WTC11 (cell line): ENCODE measurements at regions of chr3 and their contacts with region 1.

Region 1: DNA sequence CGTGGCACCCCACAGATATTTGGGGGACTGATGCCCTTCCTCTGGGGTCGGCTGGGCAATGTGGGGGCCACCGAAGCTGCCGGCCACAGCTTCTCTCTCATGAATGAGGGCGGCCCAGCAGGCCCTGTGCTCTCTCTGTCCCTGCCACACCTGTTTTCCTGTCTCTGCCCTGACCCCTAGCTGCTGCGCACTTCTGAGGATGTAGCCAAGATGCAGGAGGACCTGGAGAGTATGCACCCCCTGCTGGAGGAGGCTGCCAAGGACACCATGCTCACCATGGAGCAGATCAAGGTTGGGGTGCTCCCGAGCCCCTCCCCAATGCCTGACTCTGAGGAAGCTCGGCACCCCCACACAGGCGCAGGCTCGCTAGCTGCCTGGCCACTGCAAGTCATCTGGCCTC is 59.7 kb downstream of the SEMA3G start:
- DNase-seq: peak; percentile 88
- ATAC-seq: peak; percentile 94
- H3K4me3 Mint-ChIP-seq: no peak overlapping the region
- H3K27ac Mint-ChIP-seq: peak overlapping the region; percentile 70; the same call in 1 of the 2 replicates
- H3K4me1 Mint-ChIP-seq: peaks cover 5% of the 10 kb centered on the region; the same call in 1 of the 2 replicates
- H3K27me3 Mint-ChIP-seq: no peaks in the 10 kb centered on the region
- CTCF ChIP-seq: peak; percentile 65

Region 2: DNA sequence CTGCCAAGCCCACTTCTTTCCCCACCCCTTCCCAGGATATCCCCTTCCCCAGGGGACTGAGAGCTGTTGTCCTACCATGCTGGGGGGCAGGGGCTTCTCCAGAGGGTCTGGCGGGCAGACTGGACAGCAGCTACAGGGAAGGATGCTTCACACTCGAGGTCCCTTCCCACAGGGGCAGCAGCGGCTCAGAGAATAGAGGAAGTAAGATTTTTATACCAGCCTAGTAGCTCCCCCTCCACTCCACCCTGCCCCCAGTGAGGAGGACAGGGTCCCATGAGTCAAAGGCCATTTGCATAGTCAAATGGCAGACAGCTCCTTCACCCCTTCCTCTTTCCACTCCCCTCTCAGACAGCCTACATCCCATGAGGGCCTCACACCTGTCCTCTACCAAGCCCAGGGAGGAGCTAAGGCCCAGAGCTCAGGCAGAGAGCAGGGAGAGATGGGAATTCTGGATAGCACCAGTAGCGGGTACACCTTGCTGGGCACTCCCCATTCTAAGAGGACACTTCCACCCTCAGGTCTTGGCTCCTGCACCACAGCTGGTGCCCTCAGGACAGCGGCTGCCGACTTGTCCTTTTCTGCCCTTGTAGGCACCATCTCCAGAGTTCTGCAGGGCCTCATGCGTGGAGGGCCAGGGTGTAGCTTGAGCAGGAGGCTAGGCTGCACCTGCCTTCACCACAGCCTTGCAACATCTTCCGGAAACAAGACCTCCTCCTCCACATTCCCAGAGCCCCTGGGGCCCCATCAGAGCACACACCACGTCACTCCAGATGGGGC is 159.5 kb before region 1 on chr3 and contains the start of gene TLR9:
- CTCF ChIA-PET with region 1: interaction called, 73 read pairs
- POLR2A ChIA-PET with region 1: no interaction called
- DNase-seq: no peak
- ATAC-seq: peak; percentile 21; the same call in 1 of the 2 replicates
- H3K4me3 Mint-ChIP-seq: no peak within 1 kb of the TSS
- H3K27ac Mint-ChIP-seq: no peak within 1 kb of the TSS
- H3K4me1 Mint-ChIP-seq: peaks cover 5% of the 10 kb centered on the region
- H3K27me3 Mint-ChIP-seq: no peaks in the 10 kb centered on the region
- CTCF ChIP-seq: no peak
- total RNA-seq, gene TLR9: not detected in 3 replicates

Region 3: DNA sequence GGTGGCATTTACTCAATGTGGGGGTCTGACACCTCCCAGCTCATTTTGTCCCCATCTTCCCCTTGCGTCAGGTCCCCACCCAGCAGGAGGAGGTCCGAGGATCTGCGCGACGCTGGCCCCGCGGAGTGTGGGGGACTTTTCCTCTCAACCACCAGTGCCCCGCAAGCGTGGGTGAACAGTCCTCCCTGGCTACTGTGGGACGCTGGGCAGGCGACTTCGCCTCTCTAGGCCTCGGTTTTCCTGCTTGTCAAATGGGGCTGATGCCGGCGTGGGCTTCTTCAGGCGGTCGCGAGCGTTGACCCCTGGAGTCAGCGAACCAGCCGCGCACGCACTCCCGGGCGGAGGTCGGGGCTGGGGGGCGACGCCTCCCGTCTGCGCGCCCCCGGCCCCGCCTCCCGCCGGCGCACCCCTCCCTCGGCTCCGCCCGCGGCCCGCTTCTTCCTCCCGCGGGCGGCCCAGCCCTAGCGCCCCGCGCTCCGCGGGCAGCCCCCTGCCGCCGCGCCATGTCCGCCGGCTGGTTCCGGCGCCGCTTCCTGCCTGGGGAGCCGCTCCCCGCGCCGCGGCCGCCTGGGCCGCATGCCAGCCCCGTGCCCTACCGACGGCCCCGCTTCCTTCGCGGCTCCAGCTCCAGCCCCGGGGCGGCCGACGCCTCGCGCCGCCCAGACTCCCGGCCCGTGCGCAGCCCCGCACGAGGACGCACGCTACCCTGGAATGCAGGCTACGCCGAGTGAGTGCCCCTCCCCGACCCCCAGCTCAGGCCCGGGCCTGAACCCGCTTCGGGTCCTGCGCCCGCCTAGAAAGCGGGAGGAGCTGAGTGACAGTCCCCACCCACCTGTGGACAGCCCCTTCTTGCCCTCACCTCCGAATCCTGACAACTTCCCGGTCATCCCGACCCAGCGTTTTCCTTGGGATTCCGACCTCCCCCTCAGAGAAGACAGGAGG is 139.6 kb before region 1 on chr3 and contains the start of gene PPM1M:
- CTCF ChIA-PET with region 1: interaction called, 10 read pairs
- POLR2A ChIA-PET with region 1: no interaction called
- DNase-seq: peak; percentile 72
- ATAC-seq: peak; percentile 86
- H3K4me3 Mint-ChIP-seq: peak within 1 kb of the TSS; percentile 67
- H3K27ac Mint-ChIP-seq: no peak within 1 kb of the TSS
- H3K4me1 Mint-ChIP-seq: peaks cover 15% of the 10 kb centered on the region
- H3K27me3 Mint-ChIP-seq: peaks cover 50% of the 10 kb centered on the region
- CTCF ChIP-seq: no peak
- total RNA-seq, gene PPM1M: 5.1 to 7.0 TPM (median 6.0 TPM) in 3 replicates

Region 4: GRCh38 chr3:52299879-52300611 is 85.1 kb before region 1 on chr3:
- CTCF ChIA-PET with region 1: interaction called, 74 read pairs
- POLR2A ChIA-PET with region 1: no interaction called
- DNase-seq: peak; percentile 26
- ATAC-seq: peak; percentile 55
- H3K4me3 Mint-ChIP-seq: peak overlapping the region; percentile 65
- H3K27ac Mint-ChIP-seq: no peak overlapping the region
- H3K4me1 Mint-ChIP-seq: peaks cover 18% of the 10 kb centered on the region
- H3K27me3 Mint-ChIP-seq: peaks cover 6% of the 10 kb centered on the region
- CTCF ChIP-seq: no peak

Region 5: DNA sequence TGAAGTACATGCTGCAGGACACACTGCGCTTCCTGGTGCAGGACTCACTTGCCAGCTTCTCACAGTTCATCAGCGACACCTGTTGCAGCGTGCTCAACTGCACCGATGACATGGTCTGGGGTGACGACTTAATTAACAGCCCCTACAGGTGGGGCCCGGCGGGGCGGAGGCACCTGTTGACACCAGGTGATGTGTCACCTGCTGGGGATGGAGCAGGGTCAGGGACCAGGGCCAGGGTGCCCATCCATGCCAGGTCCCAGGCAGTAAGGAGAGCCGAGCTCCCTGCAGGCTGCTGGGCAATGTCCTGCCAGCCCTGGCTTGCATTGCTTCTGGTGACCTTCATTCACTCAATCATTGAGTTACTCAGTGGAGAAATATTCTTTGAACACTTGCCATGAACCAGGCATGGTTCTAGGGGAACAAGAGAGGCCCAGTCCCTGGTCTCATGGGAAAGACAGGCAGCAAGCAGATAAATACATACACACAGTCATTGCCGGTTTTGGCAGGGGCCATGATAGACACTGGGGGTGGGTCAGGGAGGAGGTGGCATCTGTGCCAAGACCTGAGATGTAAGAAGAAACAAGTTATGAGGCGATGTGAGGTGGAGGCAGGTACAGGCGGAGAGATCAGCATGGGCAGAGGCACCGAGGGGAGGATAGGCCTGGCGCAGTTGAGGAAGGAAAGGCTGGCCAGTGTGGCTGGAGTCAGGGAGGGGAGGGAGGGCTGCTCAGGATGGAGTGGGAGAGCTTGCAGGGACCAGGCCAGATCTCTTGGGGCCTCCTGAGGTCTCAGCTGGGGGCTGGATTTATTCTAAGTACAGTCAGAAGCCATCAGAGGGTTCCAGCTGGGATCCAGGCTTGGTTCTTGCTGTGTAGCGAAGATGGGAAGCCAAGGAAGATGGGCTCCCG is 38.3 kb before region 1 on chr3:
- CTCF ChIA-PET with region 1: interaction called, 45 read pairs
- POLR2A ChIA-PET with region 1: interaction called, 3 read pairs
- DNase-seq: no peak
- ATAC-seq: no peak
- H3K4me3 Mint-ChIP-seq: no peak overlapping the region
- H3K27ac Mint-ChIP-seq: no peak overlapping the region
- H3K4me1 Mint-ChIP-seq: no peaks in the 10 kb centered on the region
- H3K27me3 Mint-ChIP-seq: no peaks in the 10 kb centered on the region; the same call in 1 of the 2 replicates
- CTCF ChIP-seq: no peak

Region 6: GRCh38 chr3:52372822-52373504 is 12.2 kb before region 1 on chr3:
- CTCF ChIA-PET with region 1: interaction called, 51 read pairs
- POLR2A ChIA-PET with region 1: interaction called, 3 read pairs
- DNase-seq: peak; percentile 78
- ATAC-seq: peak; percentile 55
- H3K4me3 Mint-ChIP-seq: peak overlapping the region; percentile 53
- H3K27ac Mint-ChIP-seq: no peak overlapping the region
- H3K4me1 Mint-ChIP-seq: peaks cover 22% of the 10 kb centered on the region
- H3K27me3 Mint-ChIP-seq: peaks cover 11% of the 10 kb centered on the region
- CTCF ChIP-seq: no peak

Region 7: DNA sequence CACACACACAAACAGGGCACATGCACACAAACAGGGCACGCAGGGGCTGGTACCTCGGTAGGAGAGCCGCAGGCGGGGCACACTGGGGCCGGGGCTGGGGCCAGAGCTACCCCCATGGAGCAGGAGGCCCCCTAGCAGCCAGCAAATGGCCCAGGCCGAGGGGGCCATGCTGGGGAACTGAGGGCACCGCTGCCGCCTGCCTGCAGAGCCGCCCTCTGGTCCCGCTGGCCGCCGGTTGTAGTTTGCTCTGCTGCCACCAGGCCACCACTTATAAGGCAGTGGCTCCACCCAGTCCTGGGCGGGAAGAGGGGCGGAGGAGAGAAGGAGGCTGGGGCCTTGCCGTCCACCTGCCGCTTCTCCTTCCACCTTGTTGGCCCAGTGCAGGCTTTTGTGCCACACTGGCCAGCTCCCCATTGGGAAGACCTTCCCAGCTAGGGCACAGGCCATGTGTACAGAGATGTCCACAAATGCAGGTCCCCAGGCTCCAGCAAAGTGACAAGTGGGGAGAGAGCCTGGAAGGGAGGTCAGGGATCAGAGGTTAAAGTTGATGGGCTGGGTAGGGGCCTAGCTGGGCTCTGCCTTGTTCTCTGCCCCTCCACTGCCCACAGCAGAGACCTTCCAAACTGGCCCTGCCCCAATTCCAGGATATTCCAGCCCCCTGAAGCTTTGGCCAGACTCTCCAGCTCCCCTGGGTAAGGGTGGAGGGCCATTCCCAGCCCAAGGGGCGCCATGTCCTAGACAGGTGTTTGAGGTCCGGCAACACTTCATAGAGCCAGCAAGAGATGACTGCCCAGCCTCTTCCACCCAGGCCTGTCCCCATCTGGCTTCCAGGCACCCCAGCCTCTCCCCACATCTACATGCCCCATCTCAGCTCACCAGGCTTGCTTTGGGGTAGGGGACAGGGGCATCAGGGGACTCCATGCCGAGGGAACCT is 60.0 kb after region 1 on chr3 and contains the start of gene SEMA3G:
- CTCF ChIA-PET with region 1: interaction called, 20 read pairs
- POLR2A ChIA-PET with region 1: no interaction called
- DNase-seq: peak; percentile 83
- ATAC-seq: peak; percentile 88
- H3K4me3 Mint-ChIP-seq: peak within 1 kb of the TSS; percentile 16; the same call in 1 of the 2 replicates
- H3K27ac Mint-ChIP-seq: no peak within 1 kb of the TSS
- H3K4me1 Mint-ChIP-seq: peaks cover 11% of the 10 kb centered on the region; the same call in 1 of the 2 replicates
- H3K27me3 Mint-ChIP-seq: no peaks in the 10 kb centered on the region; the same call in 1 of the 2 replicates
- CTCF ChIP-seq: no peak
- total RNA-seq, gene SEMA3G: 1.6 to 2.5 TPM (median 2.5 TPM) in 3 replicates

Region 8: GRCh38 chr3:52536369-52537164 is 151.4 kb after region 1 on chr3 and contains the start of gene UQCC5:
- CTCF ChIA-PET with region 1: no interaction called
- POLR2A ChIA-PET with region 1: no interaction called
- DNase-seq: peak; percentile 98
- ATAC-seq: peak; percentile 86
- H3K4me3 Mint-ChIP-seq: peak within 1 kb of the TSS; percentile 98
- H3K27ac Mint-ChIP-seq: peak within 1 kb of the TSS; percentile 99
- H3K4me1 Mint-ChIP-seq: peaks cover 51% of the 10 kb centered on the region
- H3K27me3 Mint-ChIP-seq: no peaks in the 10 kb centered on the region
- CTCF ChIP-seq: no peak
- total RNA-seq, gene UQCC5: 30.0 to 37.8 TPM (median 36.4 TPM) in 3 replicates